HEK293 (cell line): ENCODE measurements at regions of chr12 and their contacts with region 1.

Region 1: DNA sequence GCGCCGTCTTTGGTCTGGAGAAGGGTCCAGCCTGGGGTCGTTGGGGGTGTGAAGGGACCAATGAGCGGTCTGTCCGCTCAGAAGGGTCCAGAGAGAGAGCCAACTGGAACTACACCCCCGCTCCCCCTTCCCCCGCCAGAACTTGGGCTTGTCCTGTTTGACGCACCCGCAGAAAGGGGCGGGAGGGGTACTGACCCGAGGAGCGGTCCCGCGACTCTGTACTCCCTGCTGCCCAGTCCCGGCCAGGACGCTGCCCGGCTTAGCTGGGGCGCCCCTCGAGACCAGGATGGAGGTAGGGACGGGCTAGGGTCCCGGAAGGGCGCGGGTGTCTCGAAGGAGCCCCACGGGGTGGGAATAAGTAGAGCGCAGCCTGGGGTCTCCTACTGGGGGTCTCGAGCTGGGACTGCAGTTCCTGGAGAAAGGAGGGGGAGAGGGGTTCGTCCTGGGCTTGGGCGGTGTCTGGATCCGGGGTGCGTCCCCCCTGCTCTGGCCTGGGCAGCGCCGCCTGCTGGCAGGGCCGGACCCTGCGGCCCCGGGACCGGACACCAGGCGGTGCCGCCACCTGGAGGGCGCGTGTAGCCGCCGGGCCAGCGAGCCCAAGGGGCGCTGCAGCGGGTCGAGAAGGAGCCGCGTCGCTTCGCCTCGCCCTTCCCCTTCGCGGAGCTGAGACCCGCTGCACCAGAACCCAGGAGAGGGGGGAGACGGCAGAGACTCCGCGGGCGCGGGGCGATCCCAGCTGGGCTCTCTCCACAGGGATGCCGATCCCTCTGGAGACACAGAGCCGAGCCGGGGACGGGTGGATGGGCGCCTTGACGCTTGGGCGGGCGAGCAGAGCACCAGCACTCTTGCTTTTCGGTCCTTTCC is 3.8 kb upstream of the CACNB3 start:
- H3K4me3 ChIP-seq: peak overlapping the region; percentile 63
- H3K27ac ChIP-seq: peak overlapping the region; percentile 79; the same call in 1 of the 2 replicates
- H3K4me1 ChIP-seq: peaks cover 3% of the 10 kb centered on the region; the same call in 1 of the 2 replicates
- CTCF ChIP-seq: peak; percentile 99

Region 2: GRCh38 chr12:48459259-48459658 is 355.2 kb before region 1 on chr12:
- CTCF ChIA-PET with region 1: no interaction called
- POLR2A ChIA-PET with region 1: no interaction called
- H3K4me3 ChIP-seq: no peak overlapping the region
- H3K27ac ChIP-seq: no peak overlapping the region
- H3K4me1 ChIP-seq: no peaks in the 10 kb centered on the region
- CTCF ChIP-seq: no peak

Region 3: DNA sequence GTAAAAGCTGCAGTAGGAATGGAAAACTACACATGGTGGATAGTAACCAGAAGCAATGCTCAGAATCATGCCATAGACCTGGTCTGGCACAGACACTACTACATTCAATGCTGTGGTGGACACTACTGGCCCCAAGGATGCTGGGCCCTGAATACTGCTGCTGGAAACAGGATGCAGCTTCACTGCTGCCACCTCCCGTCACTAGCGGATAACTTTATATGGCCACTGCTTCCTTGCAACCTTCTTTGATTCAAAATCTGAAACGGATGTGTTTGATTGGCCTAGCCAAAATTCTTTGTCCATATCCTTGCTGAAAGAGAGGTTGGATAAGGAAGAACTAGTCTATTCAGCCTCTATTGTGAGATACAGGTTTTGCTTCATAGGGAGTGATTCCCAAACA is 56.3 kb before region 1 on chr12:
- CTCF ChIA-PET with region 1: interaction called, 21 read pairs
- POLR2A ChIA-PET with region 1: interaction called, 12 read pairs
- H3K4me3 ChIP-seq: no peak overlapping the region
- H3K27ac ChIP-seq: no peak overlapping the region
- H3K4me1 ChIP-seq: no peaks in the 10 kb centered on the region
- CTCF ChIP-seq: no peak

Region 4: GRCh38 chr12:48774516-48774915 is 40.0 kb before region 1 on chr12:
- CTCF ChIA-PET with region 1: interaction called, 11 read pairs
- POLR2A ChIA-PET with region 1: no interaction called
- H3K4me3 ChIP-seq: no peak overlapping the region
- H3K27ac ChIP-seq: no peak overlapping the region
- H3K4me1 ChIP-seq: no peaks in the 10 kb centered on the region
- CTCF ChIP-seq: no peak

Region 5: GRCh38 chr12:48782457-48783395 is 31.8 kb before region 1 on chr12:
- CTCF ChIA-PET with region 1: interaction called, 12 read pairs
- POLR2A ChIA-PET with region 1: no interaction called
- H3K4me3 ChIP-seq: no peak overlapping the region
- H3K27ac ChIP-seq: no peak overlapping the region
- H3K4me1 ChIP-seq: peaks cover 6% of the 10 kb centered on the region
- CTCF ChIP-seq: no peak

Region 6: DNA sequence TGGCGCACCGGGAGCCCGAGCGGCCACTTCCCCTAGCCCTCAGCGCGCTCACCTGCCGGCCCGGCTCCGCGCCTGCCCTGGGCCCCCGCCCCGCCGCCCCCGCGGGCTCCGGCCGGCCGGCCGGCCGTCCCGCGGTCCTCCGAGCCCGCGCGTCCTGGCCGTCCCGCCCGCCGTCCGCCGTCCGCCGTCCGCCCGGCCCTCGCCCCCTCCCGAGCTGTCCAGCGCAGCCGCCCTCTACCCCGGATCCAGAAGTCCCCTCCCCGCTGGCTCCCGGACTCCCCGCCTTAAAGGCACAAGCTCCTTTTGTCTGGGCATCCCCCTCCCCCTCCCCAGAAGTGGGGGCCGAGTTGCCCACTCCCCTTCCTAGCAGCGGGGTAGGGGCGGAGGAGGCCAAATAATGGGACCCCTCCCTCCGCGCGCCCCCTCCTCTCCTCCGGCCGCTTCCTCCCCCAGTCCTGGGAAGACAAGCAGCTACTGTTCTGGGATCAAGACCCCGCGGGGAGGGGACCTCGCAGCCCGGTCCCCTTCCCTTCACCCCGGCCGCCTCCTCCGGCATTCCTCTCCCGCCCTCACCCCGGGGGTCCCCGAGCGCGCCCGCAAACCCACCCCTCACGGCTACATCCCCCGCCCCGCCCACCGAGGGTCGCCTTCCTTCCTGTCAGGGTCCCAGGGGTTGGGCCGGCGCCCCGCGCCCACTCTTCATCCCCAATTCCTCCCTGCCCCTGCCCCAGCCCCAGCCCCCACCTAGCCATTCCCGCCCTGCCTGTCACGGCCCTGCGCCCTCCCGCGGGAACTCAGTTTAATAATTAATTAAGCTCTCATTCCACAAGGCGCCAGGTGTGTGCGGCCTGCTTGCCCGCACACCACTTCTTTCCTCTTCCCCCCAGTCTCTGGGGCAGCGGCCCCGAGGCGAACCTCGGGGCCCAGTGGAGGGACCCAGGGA is 25.4 kb before region 1 on chr12 and contains the start of gene ADCY6:
- CTCF ChIA-PET with region 1: interaction called, 53 read pairs
- POLR2A ChIA-PET with region 1: interaction called, 6 read pairs
- H3K4me3 ChIP-seq: peak within 1 kb of the TSS; percentile 77
- H3K27ac ChIP-seq: peak within 1 kb of the TSS; percentile 82
- H3K4me1 ChIP-seq: peaks cover 6% of the 10 kb centered on the region
- CTCF ChIP-seq: no peak

Region 7: DNA sequence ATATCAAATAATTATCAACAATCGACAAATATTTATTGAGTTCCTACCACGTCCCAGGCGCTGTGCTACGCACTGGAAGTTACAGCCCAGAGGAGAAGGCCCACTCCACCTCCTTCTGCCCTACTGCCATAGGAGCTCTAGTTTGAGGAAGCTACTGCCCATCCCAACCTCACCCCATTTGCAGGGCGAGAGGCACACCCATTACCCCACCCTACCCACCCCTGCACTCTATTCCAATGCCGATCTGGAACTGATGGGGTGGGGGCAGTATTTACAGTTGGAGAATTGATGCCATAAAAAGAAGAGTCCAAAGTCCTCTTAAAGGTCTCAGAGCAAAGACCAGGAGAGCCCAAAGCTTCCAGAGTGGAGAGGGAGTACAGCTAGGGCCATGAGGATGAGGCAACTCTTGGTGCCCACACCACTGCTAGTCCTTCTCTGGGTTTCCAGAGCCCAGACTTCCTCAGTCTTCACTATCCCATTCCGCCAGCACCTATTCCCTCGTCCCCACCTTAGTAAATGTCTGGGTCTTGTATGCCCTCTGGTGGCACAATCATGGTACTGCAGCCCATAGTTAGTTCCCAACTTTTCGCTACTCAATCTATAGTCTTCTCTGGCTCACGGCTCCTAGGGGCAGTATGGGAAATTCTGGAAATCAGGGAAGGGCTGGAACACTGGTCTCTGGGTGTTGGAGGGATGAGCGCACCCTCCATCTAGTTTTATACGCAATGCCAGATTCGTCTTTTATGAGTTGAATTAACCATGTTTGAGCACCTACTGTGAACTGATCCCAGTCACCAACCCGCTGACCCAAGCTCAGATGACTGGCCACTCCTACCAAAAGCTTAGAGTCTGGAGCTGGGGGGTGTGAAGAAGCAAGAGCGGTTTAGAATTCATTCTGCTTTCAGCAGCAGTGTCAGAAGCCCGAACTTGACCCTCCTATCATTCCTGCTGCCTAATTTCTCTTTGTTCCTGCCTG is 18.7 kb before region 1 on chr12:
- CTCF ChIA-PET with region 1: interaction called, 53 read pairs
- POLR2A ChIA-PET with region 1: interaction called, 7 read pairs
- H3K4me3 ChIP-seq: no peak overlapping the region
- H3K27ac ChIP-seq: no peak overlapping the region
- H3K4me1 ChIP-seq: no peaks in the 10 kb centered on the region
- CTCF ChIP-seq: peak; percentile 96

Region 8: DNA sequence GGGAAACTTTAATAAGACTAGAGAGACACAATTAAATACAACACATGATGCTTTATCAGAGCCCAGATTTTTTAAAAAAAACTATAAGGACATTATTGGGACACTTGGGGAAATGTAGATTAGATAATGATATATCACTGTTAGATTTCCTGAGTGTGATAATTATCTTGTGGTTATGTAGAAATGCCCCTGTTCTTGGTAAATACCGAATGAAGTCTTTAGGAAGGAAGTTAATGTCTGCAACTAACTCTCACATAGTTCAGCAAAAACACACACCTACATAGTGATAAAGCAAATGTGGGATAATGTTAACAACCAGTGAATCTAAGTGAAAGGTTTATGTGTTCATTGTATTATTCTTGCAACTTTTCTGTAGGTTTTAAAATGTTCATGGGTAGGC is 10.8 kb before region 1 on chr12:
- CTCF ChIA-PET with region 1: interaction called, 53 read pairs
- POLR2A ChIA-PET with region 1: interaction called, 7 read pairs
- H3K4me3 ChIP-seq: no peak overlapping the region
- H3K27ac ChIP-seq: no peak overlapping the region
- H3K4me1 ChIP-seq: no peaks in the 10 kb centered on the region
- CTCF ChIP-seq: no peak